H1 (cell line): ENCODE measurements at regions of chr7 and their contacts with region 1.

Region 1: GRCh38 chr7:13130321-13130720 is 442.9 kb downstream of the ARL4A start:
- DNase-seq: no peak
- H3K4me3 ChIP-seq: no peak overlapping the region
- H3K27ac ChIP-seq: no peak overlapping the region
- H3K4me1 ChIP-seq: no peaks in the 10 kb centered on the region
- H3K27me3 ChIP-seq: no peaks in the 10 kb centered on the region
- CTCF ChIP-seq: no peak
- EP300 ChIP-seq: no peak
- POLR2A ChIP-seq: no peak
- RAD21 ChIP-seq: no peak

Region 2: DNA sequence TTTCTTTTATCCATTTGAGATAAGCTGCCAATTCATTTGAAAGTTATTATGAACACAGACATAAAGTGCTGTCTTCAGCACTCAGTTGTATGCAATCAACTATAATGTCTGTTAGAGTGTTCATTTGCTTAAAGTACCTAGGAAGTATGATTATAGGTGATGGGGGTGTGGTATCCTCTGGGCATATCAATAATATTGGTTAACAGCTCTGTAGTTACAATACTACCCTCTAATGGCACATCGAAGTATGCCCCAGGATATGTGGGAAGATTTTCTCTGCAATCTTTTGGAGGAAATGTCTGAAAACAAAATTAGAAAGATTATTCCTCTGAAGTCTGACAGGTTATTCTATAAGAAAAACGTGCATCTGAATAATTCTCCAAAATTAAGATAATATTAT is 13.2 kb before region 1 on chr7:
- CTCF ChIA-PET with region 1: interaction called, 14 read pairs
- POLR2A ChIA-PET with region 1: no interaction called
- DNase-seq: no peak
- H3K4me3 ChIP-seq: no peak overlapping the region
- H3K27ac ChIP-seq: no peak overlapping the region
- H3K4me1 ChIP-seq: peaks cover 0 to 2% (median 0%) of the 10 kb centered on the region in 4 experiments; a peak in 1 of 7 replicates
- H3K27me3 ChIP-seq: no peaks in the 10 kb centered on the region
- CTCF ChIP-seq: peak in 2 of 3 experiments; percentile 34 to 48; a peak in 2 of 4 replicates
- EP300 ChIP-seq: no peak
- POLR2A ChIP-seq: no peak
- RAD21 ChIP-seq: peak; percentile 80 to 85